Activated T-helper 1 cell treated with anti-CD3 and anti-CD28 coated beads, Interleukin-12 subunit alpha, Interleukin-12 subunit beta, Interleukin-2, Interleukin-4 antibody, amounts not matched to agents 30 ng/mL and 10 ng/mL and 1 ng/mL, durations not matched to agents 14 hours and 24 hours and 36 hours (primary cell): ENCODE measurements at regions of chr10 and their contacts with region 1.

Region 1: GRCh38 chr10:11178606-11179515 is 161.2 kb downstream of the CELF2 start:
- DNase-seq: peak; percentile 88
- H3K4me3 Mint-ChIP-seq: no peak overlapping the region
- H3K27ac Mint-ChIP-seq: no peak overlapping the region
- H3K4me1 Mint-ChIP-seq: peaks cover 30% of the 10 kb centered on the region
- H3K27me3 Mint-ChIP-seq: no peaks in the 10 kb centered on the region

Region 2: GRCh38 chr10:10897400-10897799 is 281.5 kb before region 1 on chr10:
- intact Hi-C with region 1: no loop called
- DNase-seq: no peak
- H3K4me3 Mint-ChIP-seq: no peak overlapping the region
- H3K27ac Mint-ChIP-seq: no peak overlapping the region
- H3K4me1 Mint-ChIP-seq: no peaks in the 10 kb centered on the region
- H3K27me3 Mint-ChIP-seq: peaks cover 6% of the 10 kb centered on the region

Region 3: GRCh38 chr10:11106621-11107374 is 72.1 kb before region 1 on chr10:
- intact Hi-C with region 1: no loop called
- DNase-seq: no peak
- H3K4me3 Mint-ChIP-seq: no peak overlapping the region
- H3K27ac Mint-ChIP-seq: no peak overlapping the region
- H3K4me1 Mint-ChIP-seq: peaks cover 13% of the 10 kb centered on the region
- H3K27me3 Mint-ChIP-seq: peaks cover 9% of the 10 kb centered on the region

Region 4: DNA sequence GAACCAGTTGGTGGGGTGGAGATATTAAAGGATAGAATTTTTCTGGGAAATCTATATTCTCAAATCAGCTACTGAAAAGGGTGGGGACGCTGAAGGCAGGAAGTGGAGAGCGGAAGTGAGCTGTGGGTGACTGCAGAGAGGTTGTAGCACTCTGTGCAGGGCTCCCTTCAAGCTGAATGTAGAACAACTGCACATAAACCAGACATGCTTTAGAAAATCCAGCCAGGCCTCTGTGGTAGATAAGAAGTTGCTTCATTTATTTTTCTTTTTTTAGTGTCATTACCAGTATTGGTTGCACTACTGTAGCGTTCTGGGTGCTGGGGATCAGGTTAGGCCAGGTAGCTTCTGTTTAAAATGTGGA is 33.4 kb before region 1 on chr10:
- intact Hi-C with region 1: loop called (anchors 1 kb)
- DNase-seq: peak; percentile 61
- H3K4me3 Mint-ChIP-seq: peak overlapping the region; percentile 82
- H3K27ac Mint-ChIP-seq: peak overlapping the region; percentile 98
- H3K4me1 Mint-ChIP-seq: peaks cover 92% of the 10 kb centered on the region
- H3K27me3 Mint-ChIP-seq: no peaks in the 10 kb centered on the region

Region 5: DNA sequence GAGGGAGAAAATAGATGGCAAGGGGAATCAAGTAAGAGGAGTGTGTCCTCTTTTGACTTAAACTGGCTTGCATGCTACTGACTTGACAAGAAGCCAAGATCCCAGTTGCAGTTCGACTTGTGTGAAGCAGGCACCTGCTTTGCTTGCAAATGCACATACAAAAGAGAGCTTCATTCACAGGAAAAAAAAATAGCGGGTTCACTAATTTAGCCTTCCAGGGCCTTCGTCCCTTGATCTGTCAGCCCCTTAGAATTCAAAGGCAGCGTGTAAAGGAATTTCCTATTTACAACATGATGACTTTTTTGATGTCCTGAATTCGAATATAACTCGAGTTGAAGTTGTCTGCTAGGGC is 30.9 kb after region 1 on chr10:
- intact Hi-C with region 1: loop called (anchors 1 kb)
- DNase-seq: no peak
- H3K4me3 Mint-ChIP-seq: peak overlapping the region; percentile 76
- H3K27ac Mint-ChIP-seq: peak overlapping the region; percentile 96
- H3K4me1 Mint-ChIP-seq: peaks cover 98% of the 10 kb centered on the region
- H3K27me3 Mint-ChIP-seq: peaks cover 1% of the 10 kb centered on the region

Region 6: GRCh38 chr10:11225935-11226334 is 47.1 kb after region 1 on chr10:
- intact Hi-C with region 1: loop called (anchors 2 kb)
- DNase-seq: peak; percentile 48
- H3K4me3 Mint-ChIP-seq: peak overlapping the region; percentile 47
- H3K27ac Mint-ChIP-seq: peak overlapping the region; percentile 91
- H3K4me1 Mint-ChIP-seq: peaks cover 94% of the 10 kb centered on the region
- H3K27me3 Mint-ChIP-seq: no peaks in the 10 kb centered on the region

Region 7: GRCh38 chr10:11270135-11270857 is 91.4 kb after region 1 on chr10:
- intact Hi-C with region 1: loop called (anchors 1 kb)
- DNase-seq: peak; percentile 26
- H3K4me3 Mint-ChIP-seq: no peak overlapping the region
- H3K27ac Mint-ChIP-seq: peak overlapping the region; percentile 68
- H3K4me1 Mint-ChIP-seq: peaks cover 69% of the 10 kb centered on the region
- H3K27me3 Mint-ChIP-seq: no peaks in the 10 kb centered on the region

Region 8: DNA sequence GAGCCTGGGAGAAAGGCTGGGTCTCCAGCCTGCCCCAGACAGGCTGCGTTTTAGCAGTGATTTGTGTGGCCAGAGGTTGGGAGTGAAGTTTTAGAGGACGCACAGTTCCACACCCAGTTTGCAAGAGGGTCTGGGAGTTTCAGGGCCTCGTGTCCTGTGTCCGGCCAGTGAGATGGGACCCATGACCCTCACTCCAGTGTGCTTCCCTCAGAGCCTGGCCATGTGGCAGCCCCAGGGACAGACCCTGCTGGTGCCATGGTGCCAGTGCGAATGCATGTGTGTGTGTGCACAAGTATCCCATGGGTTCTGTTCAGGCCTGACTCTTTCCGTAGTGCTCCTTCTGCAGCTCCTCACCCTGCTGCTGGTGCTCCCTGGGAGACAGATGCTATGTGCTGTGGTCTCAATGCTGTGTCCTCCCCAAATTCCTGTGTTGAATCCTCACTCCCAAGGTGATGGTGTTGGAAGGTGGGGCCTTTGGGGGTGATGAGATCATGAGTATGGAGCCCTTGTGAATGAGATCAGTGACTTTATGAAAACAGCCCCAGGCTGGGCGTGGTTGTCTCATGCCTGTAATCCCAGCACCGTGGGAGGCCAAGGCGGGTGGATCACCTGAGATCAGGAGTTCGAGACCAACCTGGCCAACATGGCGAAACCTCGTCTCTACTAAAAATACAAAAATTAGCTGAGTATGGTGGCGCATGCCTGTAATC is 579.8 kb after region 1 on chr10:
- intact Hi-C with region 1: no loop called
- DNase-seq: no peak
- H3K4me3 Mint-ChIP-seq: no peak overlapping the region
- H3K27ac Mint-ChIP-seq: no peak overlapping the region
- H3K4me1 Mint-ChIP-seq: no peaks in the 10 kb centered on the region
- H3K27me3 Mint-ChIP-seq: peaks cover 14% of the 10 kb centered on the region

Region 9: DNA sequence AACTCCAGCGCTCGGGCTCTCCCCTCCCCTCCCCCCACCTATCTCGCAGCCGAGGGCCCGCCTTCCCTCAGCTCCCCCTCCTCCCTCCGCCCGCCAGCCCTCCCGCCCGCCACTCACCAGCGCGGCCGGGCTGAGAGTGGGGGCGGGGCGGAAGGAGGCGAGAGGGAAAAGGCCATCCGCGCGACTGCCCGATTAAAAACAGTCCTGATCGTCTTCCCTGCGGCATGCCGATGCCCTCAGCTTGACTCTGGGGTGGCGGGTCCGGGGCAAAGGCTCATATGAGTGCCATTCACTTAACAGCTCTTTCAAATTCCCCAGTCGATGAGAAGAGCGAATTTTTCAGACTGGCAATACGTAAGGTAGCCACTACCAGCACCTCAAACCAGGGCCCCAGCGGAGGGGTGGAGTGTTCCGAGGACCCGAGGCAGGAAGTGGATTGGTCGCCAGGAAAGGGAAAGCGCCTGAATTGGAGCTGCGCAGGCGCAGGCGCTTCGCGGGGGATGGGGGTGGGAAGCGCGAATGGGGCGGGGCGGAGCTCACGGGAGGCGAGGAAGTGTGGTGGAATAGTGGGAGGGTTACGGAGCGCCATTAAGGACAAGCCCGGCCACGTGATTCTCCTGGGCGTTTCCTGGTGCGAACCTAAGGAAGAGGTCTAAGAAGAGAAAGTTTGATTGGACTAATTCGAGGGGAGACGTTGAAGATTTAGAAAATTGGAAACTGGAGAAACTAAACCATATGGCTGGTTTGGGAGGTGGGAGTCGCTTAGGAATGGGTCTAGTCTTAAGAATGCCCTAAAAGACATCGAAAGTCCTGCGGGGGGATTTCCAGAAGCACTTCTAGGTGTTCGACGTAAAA is 864.2 kb after region 1 on chr10 and contains the start of gene UPF2:
- intact Hi-C with region 1: loop called (anchors 10 kb)
- DNase-seq: peak; percentile 94
- H3K4me3 Mint-ChIP-seq: peak within 1 kb of the TSS; percentile 99
- H3K27ac Mint-ChIP-seq: peak within 1 kb of the TSS; percentile 99
- H3K4me1 Mint-ChIP-seq: peaks cover 34% of the 10 kb centered on the region
- H3K27me3 Mint-ChIP-seq: no peaks in the 10 kb centered on the region
- total RNA-seq, gene UPF2: 38.9 and 43.6 TPM in 2 replicates